Natural killer cell (primary cell): ENCODE measurements at regions of chr4 and their contacts with region 1.

Region 1: GRCh38 chr4:25367004-25367621 is 9.9 kb upstream of the ANAPC4 start:
- DNase-seq: peak in 1 of 2 donors; percentile 66
- ATAC-seq: no peak
- H3K4me3 ChIP-seq: no peak overlapping the region
- H3K4me3 Mint-ChIP-seq: no peak overlapping the region
- H3K27ac ChIP-seq: no peak overlapping the region
- H3K27ac Mint-ChIP-seq: no peak overlapping the region
- H3K4me1 ChIP-seq: no peaks in the 10 kb centered on the region
- H3K4me1 Mint-ChIP-seq: no peaks in the 10 kb centered on the region
- H3K27me3 ChIP-seq: no peaks in the 10 kb centered on the region
- H3K27me3 Mint-ChIP-seq: no peaks in the 10 kb centered on the region
- CTCF ChIP-seq: peak; percentile 47

Region 2: GRCh38 chr4:24980064-24980690 is 386.9 kb before region 1 on chr4:
- intact Hi-C with region 1: loop called (anchors 5 kb)
- DNase-seq: peak; percentile 18 to 74
- ATAC-seq: peak in 2 of 3 donors; percentile 73 to 82
- H3K4me3 ChIP-seq: no peak overlapping the region
- H3K4me3 Mint-ChIP-seq: peak overlapping the region; percentile 71
- H3K27ac ChIP-seq: no peak overlapping the region
- H3K27ac Mint-ChIP-seq: no peak overlapping the region
- H3K4me1 ChIP-seq: peaks cover 6% of the 10 kb centered on the region
- H3K4me1 Mint-ChIP-seq: peaks cover 5 to 16% of the 10 kb centered on the region in 2 donors
- H3K27me3 ChIP-seq: peaks cover 6% of the 10 kb centered on the region
- H3K27me3 Mint-ChIP-seq: peaks cover 6 to 41% of the 10 kb centered on the region in 2 donors
- CTCF ChIP-seq: peak; percentile 86

Region 3: DNA sequence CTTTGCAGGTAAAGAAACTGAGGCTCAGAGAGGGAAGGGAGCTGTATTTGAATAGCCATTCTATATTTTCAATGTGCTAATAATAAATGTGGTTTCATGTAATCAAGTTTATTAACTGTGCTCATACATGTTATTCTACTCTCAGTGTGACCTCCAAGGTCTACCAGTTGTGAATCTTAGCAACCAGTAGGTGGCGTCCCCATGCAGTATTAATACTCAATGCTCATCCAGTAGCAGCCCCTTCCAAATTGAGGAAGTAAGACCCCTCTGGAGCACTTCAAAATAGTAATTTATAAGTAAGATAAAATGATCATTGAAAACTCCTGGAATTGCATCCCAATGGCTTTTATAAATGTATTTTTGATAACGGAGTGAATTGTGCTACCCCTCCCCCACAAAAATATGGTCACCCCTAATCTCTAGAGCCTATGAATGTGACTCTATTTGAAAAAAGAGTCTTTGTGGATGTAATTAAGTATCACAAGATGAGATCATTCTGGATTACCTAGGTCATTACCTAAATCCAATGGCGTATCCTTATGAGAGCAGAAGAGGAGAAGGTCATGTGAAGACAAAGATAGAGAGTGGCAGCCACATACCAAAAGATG is 186.5 kb before region 1 on chr4:
- intact Hi-C with region 1: loop called (anchors 1 kb)
- DNase-seq: peak in 1 of 2 donors; percentile 73
- ATAC-seq: peak; percentile 67 to 80 (median 76)
- H3K4me3 ChIP-seq: no peak overlapping the region
- H3K4me3 Mint-ChIP-seq: no peak overlapping the region
- H3K27ac ChIP-seq: no peak overlapping the region
- H3K27ac Mint-ChIP-seq: no peak overlapping the region
- H3K4me1 ChIP-seq: peaks cover 2% of the 10 kb centered on the region
- H3K4me1 Mint-ChIP-seq: peaks cover 35 to 36% of the 10 kb centered on the region in 2 donors
- H3K27me3 ChIP-seq: no peaks in the 10 kb centered on the region
- H3K27me3 Mint-ChIP-seq: no peaks in the 10 kb centered on the region
- CTCF ChIP-seq: peak; percentile 71

Region 4: GRCh38 chr4:25638806-25639205 is 271.7 kb after region 1 on chr4:
- intact Hi-C with region 1: no loop called
- DNase-seq: no peak
- ATAC-seq: no peak
- H3K4me3 ChIP-seq: no peak overlapping the region
- H3K4me3 Mint-ChIP-seq: no peak overlapping the region
- H3K27ac ChIP-seq: no peak overlapping the region
- H3K27ac Mint-ChIP-seq: no peak overlapping the region
- H3K4me1 ChIP-seq: peaks cover 15% of the 10 kb centered on the region
- H3K4me1 Mint-ChIP-seq: peaks cover 13 to 22% of the 10 kb centered on the region in 2 donors
- H3K27me3 ChIP-seq: no peaks in the 10 kb centered on the region
- H3K27me3 Mint-ChIP-seq: peaks cover 7 to 25% of the 10 kb centered on the region in 2 donors
- CTCF ChIP-seq: no peak

Region 5: DNA sequence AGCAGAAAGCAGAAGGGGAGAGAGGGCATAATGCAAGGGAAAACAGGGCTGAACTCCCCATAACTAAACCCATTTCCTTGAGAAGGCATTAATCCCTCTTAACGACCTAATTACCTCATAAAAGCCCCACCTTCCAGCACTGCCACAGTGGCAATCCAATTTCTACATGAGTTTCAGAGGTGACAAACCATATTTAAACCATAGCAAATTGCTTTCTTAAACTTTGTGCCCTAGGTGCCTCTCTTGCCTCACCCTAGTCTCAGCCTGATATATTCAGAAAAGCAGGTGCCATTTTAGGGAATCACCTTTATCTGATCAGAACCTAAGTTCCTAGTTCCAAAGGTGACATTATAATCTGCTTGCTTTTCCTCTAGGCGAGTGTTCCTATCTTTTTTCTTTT is 337.4 kb after region 1 on chr4:
- intact Hi-C with region 1: no loop called
- DNase-seq: no peak
- ATAC-seq: no peak
- H3K4me3 ChIP-seq: no peak overlapping the region
- H3K4me3 Mint-ChIP-seq: no peak overlapping the region
- H3K27ac ChIP-seq: no peak overlapping the region
- H3K27ac Mint-ChIP-seq: no peak overlapping the region
- H3K4me1 ChIP-seq: no peaks in the 10 kb centered on the region
- H3K4me1 Mint-ChIP-seq: peaks cover 0 to 6% of the 10 kb centered on the region in 2 donors
- H3K27me3 ChIP-seq: no peaks in the 10 kb centered on the region
- H3K27me3 Mint-ChIP-seq: peaks cover 0 to 6% of the 10 kb centered on the region in 2 donors
- CTCF ChIP-seq: no peak